Pancreas (tissue), 10 donors: ENCODE measurements at regions of chr11 and their contacts with region 1.

Region 1: GRCh38 chr11:83292709-83293456 is 6.7 kb upstream of the CCDC90B start:
- DNase-seq: peak in 2 of 6 donors; percentile 31 to 38
- ATAC-seq: peak; percentile 67 to 92 (median 92)
- H3K4me3 ChIP-seq: no peak overlapping the region
- H3K27ac ChIP-seq: no peak overlapping the region
- H3K4me1 ChIP-seq: no peaks in the 10 kb centered on the region
- H3K27me3 ChIP-seq: no peaks in the 10 kb centered on the region
- CTCF ChIP-seq: peak; percentile 30 to 59 (median 48)

Region 2: GRCh38 chr11:83819933-83820549 is 527.2 kb after region 1 on chr11:
- intact Hi-C with region 1: loop called in 2 of 3 experiments (anchors 5 to 10 kb)
- DNase-seq: peak in 3 of 6 donors; percentile 10 to 29 (median 24)
- ATAC-seq: peak; percentile 80 to 92 (median 90)
- H3K4me3 ChIP-seq: no peak overlapping the region
- H3K27ac ChIP-seq: no peak overlapping the region
- H3K4me1 ChIP-seq: no peaks in the 10 kb centered on the region
- H3K27me3 ChIP-seq: no peaks in the 10 kb centered on the region
- CTCF ChIP-seq: peak; percentile 25 to 52 (median 39)